CD4-positive, alpha-beta T cell (primary cell): ENCODE measurements at regions of chr22 and their contacts with region 1.

Region 1: DNA sequence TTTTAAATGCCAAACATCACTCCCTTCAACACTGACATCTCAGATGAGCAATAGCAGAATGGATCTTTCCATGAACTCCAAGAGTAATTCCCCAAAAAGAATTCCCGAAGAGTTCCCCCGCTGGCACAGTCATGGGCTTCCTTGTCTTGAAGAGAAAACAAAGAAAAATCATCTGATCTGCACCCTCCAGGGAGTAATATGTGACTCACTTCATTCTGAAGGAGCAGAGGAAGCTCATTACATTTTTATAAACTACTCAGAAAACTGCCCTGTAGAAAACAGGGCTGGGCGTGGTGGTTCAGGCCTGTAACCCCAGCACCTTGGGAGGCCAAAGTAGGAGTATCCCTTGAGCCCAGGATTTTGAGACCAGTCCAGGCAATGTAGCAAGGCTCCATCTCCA is 35.7 kb downstream of the CELSR1 start:
- DNase-seq: no peak
- ATAC-seq: no peak
- H3K4me3 ChIP-seq: no peak overlapping the region
- H3K4me3 Mint-ChIP-seq: no peak overlapping the region
- H3K27ac ChIP-seq: no peak overlapping the region
- H3K27ac Mint-ChIP-seq: no peak overlapping the region
- H3K4me1 ChIP-seq: peaks cover 11% of the 10 kb centered on the region
- H3K4me1 Mint-ChIP-seq: peaks cover 15% of the 10 kb centered on the region
- H3K27me3 ChIP-seq: peaks cover 7 to 9% of the 10 kb centered on the region in 2 experiments
- H3K27me3 Mint-ChIP-seq: peaks cover 19% of the 10 kb centered on the region
- CTCF ChIP-seq: no peak

Region 2: DNA sequence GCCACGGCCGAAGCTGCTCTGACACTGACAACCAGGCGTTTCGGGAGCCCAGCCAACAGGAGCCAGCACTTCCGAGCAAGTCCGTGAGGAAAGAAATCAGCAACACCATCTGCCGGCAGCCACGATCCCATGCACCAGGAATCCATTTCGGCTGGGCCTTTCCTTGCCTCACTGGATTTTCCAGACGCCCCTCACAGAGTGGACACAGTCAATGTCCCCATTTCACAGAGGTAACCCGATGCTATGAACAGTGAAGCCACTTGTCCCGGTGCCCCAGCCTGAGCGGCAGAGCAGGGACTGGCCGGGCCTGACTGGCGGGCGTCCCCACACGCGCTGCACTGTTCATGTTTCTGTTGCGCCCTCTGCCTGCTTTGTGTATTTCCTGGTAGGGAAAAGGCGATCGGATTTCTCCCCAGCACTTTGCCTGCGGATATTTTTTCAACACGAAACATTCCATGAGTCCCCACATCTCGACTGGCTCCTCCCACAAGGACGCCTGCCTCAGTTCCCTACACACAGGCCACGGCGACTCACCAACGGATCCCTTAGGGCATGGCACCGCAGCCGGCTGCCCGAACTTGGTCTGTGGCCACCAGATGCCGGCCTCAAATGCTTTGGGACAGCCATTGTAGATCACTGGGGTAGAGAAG is 110.9 kb before region 1 on chr22:
- CTCF ChIA-PET with region 1: no interaction called
- POLR2A ChIA-PET with region 1: no interaction called
- intact Hi-C with region 1: loop called in 1 of 2 experiments (anchors 10 kb)
- DNase-seq: no peak
- ATAC-seq: no peak
- H3K4me3 ChIP-seq: no peak overlapping the region
- H3K4me3 Mint-ChIP-seq: no peak overlapping the region
- H3K27ac ChIP-seq: no peak overlapping the region
- H3K27ac Mint-ChIP-seq: no peak overlapping the region
- H3K4me1 ChIP-seq: peaks cover 7% of the 10 kb centered on the region
- H3K4me1 Mint-ChIP-seq: peaks cover 5% of the 10 kb centered on the region
- H3K27me3 ChIP-seq: no peaks in the 10 kb centered on the region
- H3K27me3 Mint-ChIP-seq: no peaks in the 10 kb centered on the region
- CTCF ChIP-seq: no peak